ENCODE measurements at regions of chr4 and their contacts with region 1.

Region 1: DNA sequence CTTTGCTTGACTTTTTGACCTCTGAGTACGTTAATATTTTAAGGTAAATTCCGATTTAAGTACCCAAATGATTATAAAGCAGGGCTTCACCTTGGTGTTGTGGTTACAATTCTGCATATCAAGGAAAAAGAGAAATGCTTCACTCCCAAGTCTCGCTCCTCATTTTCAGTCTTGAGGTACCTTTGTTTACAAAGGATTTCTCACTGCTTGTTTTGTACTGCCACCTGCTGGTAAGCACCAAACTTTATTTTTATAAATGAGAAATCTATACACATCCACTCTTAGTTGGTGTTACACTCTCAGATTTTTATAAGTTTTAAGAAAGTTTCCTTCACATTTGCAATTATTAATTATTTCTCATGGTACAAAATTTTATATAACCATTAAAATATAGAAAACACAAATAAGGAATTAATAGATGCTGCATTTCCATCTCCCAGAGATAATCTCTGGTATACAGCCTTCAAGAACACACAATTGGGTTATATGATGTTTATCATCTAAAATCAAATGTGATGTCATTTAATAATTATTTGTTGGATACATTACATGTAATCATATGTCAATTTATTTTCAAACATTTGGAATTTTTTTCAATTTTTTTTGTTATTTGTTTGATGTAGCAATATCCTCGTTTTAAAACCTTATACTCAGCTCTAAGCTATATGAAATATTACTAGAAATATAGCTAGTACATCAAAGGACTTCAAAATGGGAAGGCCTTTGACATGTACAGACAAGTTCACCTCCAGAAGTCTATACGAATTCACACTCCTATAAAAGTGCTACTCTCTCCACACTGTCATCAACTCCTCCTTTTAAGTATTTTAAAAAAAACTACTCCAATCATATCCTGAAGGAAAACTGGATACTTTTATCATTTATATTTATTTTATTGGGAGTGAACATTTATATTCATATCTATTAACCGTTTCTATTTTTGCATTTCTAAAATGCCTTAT is 179.9 kb downstream of the KCNIP4 start:
- DNase-seq: peak in 1 of 2 experiments; percentile 40
- ATAC-seq: peak; percentile 34 to 70; a peak in 3 of 6 replicates
- H3K4me3 ChIP-seq: no peak overlapping the region
- H3K27ac ChIP-seq: no peak overlapping the region
- H3K4me1 ChIP-seq: no peaks in the 10 kb centered on the region
- CTCF ChIP-seq: peak; percentile 66
- EP300 ChIP-seq: no peak
- POLR2A ChIP-seq: no peak
- RAD21 ChIP-seq: peak; percentile 76 to 82

Region 2: GRCh38 chr4:21512353-21512752 is 256.3 kb before region 1 on chr4:
- CTCF ChIA-PET with region 1: interaction called, 23 read pairs
- POLR2A ChIA-PET with region 1: no interaction called
- DNase-seq: peak; percentile 0 to 26
- ATAC-seq: 0 out of 6 replicates have a peak, but pooled peaks of 1 of the 2 experiments have one; percentile 31
- H3K4me3 ChIP-seq: no peak overlapping the region
- H3K27ac ChIP-seq: no peak overlapping the region
- H3K4me1 ChIP-seq: no peaks in the 10 kb centered on the region
- CTCF ChIP-seq: peak; percentile 44
- EP300 ChIP-seq: no peak
- POLR2A ChIP-seq: no peak
- RAD21 ChIP-seq: peak; percentile 59

Region 3: GRCh38 chr4:21742326-21742725 is 26.3 kb before region 1 on chr4:
- CTCF ChIA-PET with region 1: no interaction called
- POLR2A ChIA-PET with region 1: no interaction called
- DNase-seq: no peak
- ATAC-seq: no peak
- H3K4me3 ChIP-seq: no peak overlapping the region
- H3K27ac ChIP-seq: no peak overlapping the region
- H3K4me1 ChIP-seq: no peaks in the 10 kb centered on the region
- CTCF ChIP-seq: no peak
- EP300 ChIP-seq: no peak
- POLR2A ChIP-seq: no peak
- RAD21 ChIP-seq: no peak